ENCODE measurements at regions of chr17 and their contacts with region 1.

Region 1: DNA sequence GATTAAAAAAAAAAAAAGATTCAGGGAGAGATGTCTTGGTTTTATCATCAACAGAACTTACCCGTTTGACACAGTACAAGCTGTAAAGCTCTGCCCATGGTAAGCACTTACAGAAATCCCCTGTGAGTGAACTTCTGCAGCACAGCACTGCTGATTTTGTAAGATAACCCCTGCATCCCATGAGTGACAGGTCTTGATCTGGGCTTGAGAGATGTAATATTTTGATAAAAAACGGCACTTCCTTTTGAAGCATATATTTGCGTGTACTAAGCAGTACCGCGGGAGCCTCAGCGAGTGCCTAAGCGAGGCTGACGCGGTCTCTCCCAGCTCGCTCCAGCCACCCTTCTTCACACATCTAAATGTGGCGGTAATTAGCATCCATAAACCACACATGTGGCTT is 50.5 kb downstream of the IKZF3 start:
- DNase-seq: peak; percentile 64
- H3K4me3 Mint-ChIP-seq: no peak overlapping the region
- H3K27ac Mint-ChIP-seq: no peak overlapping the region
- H3K4me1 Mint-ChIP-seq: peaks cover 19% of the 10 kb centered on the region
- H3K27me3 Mint-ChIP-seq: no peaks in the 10 kb centered on the region
- CTCF ChIP-seq: no peak

Region 2: DNA sequence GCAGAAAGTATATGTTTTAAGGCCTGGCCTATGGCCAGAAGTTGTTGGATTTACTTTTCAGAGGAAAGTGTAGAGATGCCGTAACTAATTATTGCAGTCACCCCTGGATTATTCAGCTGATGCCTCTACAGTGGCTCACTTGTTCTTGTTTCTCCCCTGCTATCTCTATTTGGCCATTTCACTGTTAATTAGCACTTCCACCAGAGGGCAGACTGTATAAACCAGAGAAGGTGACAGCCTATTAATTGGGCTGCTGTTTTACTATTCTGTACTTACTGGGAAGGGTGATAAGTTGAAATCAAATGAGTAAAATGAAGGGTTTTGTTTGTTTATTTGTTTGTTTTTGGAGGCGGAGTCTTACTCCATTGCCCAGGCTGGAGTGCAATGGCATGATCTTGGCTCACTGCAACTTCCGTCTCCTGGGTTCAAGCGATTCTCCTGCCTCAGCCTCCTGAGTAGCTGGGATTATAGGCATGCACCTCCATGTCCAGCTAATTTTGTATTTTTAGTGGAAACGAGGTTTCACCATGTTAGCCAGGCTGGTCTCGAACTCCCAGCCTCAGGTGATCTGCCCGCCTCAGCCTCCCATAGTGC is 286.3 kb before region 1 on chr17:
- CTCF ChIA-PET with region 1: no interaction called
- intact Hi-C with region 1: no loop called
- DNase-seq: peak; percentile 72
- H3K4me3 Mint-ChIP-seq: no peak overlapping the region
- H3K27ac Mint-ChIP-seq: no peak overlapping the region
- H3K4me1 Mint-ChIP-seq: no peaks in the 10 kb centered on the region
- H3K27me3 Mint-ChIP-seq: no peaks in the 10 kb centered on the region
- CTCF ChIP-seq: peak; percentile 97

Region 3: DNA sequence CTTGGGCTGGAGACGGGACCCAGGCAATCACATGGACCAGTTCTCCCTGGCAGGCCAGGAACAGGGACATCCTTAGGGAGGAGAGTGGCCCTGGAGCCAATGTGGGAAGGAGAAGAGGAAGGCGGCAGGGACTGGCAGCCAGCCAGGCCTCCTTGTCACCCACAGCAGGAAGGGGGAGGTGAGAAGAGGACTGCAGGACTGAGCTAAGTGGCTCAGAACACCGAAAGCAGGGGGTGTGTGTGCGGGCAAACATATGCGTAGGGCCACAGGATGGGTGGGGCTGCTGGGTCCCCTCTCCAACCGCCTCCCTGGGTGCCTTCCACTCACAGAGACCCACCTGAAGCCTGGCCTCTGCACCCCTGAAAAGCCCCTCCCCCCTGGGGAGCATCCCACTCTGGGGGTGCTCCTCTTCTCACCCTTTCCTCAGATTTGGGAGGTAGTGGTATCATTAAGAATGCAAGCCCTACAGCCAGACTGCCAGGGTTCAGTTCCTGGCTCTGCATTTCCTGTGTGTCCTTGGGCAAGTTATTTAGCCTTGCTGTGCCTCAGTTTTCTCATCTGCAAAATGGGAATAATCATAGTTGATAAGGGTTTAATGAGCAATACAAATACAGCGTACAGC is 137.3 kb before region 1 on chr17:
- CTCF ChIA-PET with region 1: interaction called, 145 read pairs
- intact Hi-C with region 1: no loop called
- DNase-seq: peak; percentile 100
- H3K4me3 Mint-ChIP-seq: peak overlapping the region; percentile 3
- H3K27ac Mint-ChIP-seq: peak overlapping the region; percentile 62
- H3K4me1 Mint-ChIP-seq: peaks cover 91% of the 10 kb centered on the region
- H3K27me3 Mint-ChIP-seq: peaks cover 6% of the 10 kb centered on the region
- CTCF ChIP-seq: no peak

Region 4: GRCh38 chr17:39730095-39730921 is 83.3 kb before region 1 on chr17 and contains the start of gene MIEN1:
- CTCF ChIA-PET with region 1: interaction called, 1,211 read pairs
- intact Hi-C with region 1: no loop called
- DNase-seq: no peak
- H3K4me3 Mint-ChIP-seq: peak within 1 kb of the TSS; percentile 79
- H3K27ac Mint-ChIP-seq: peak within 1 kb of the TSS; percentile 90
- H3K4me1 Mint-ChIP-seq: peaks cover 34% of the 10 kb centered on the region
- H3K27me3 Mint-ChIP-seq: no peaks in the 10 kb centered on the region
- CTCF ChIP-seq: no peak
- total RNA-seq, gene MIEN1: 2,121 and 2,217 TPM in 2 replicates

Region 5: GRCh38 chr17:39787743-39788484 is 25.7 kb before region 1 on chr17:
- CTCF ChIA-PET with region 1: interaction called, 1,210 read pairs
- intact Hi-C with region 1: no loop called
- DNase-seq: peak; percentile 80
- H3K4me3 Mint-ChIP-seq: no peak overlapping the region
- H3K27ac Mint-ChIP-seq: no peak overlapping the region
- H3K4me1 Mint-ChIP-seq: peaks cover 29% of the 10 kb centered on the region
- H3K27me3 Mint-ChIP-seq: no peaks in the 10 kb centered on the region
- CTCF ChIP-seq: no peak

Region 6: DNA sequence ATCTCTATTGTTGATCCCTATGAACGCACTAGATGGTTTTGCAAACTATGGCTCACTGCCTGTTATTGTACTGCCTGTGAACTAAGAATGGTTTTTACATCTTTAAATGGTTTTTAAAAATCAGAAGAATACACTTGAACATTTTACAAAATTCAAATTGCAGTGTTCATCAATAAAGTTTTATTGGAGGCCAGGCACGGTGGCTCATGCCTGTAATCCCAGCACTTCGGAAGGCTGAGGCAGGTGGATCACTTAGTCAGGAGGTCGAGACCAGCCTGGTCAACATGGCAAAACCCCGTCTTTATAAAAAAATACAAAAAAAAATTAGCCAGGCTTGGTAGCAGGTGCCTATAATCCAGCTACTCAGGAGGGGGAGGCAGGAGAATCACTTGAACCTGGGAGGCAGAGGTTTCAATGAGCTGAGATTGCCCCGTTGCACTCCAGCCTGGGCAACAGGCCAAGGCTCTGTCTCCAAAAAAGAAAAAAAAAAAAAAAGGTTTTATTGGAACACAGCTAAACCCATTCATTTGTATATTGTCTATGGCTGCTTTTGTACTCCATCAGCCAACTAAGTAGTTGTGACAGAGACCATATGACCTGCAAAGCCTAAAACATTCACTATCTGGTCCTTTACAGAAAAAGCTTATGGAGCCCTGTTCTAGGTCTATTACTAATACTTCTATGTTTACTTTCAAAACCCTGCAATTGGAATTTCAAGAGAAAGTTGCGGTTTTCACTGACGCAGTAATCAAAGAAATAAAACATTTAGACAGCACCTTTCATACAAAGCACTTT is 31.6 kb after region 1 on chr17:
- CTCF ChIA-PET with region 1: interaction called, 809 read pairs
- intact Hi-C with region 1: no loop called
- DNase-seq: peak; percentile 81
- H3K4me3 Mint-ChIP-seq: no peak overlapping the region
- H3K27ac Mint-ChIP-seq: no peak overlapping the region
- H3K4me1 Mint-ChIP-seq: peaks cover 10% of the 10 kb centered on the region
- H3K27me3 Mint-ChIP-seq: no peaks in the 10 kb centered on the region
- CTCF ChIP-seq: no peak

Region 7: GRCh38 chr17:39939588-39940419 is 126.2 kb after region 1 on chr17:
- CTCF ChIA-PET with region 1: interaction called, 1,809 read pairs
- intact Hi-C with region 1: no loop called
- DNase-seq: peak; percentile 76
- H3K4me3 Mint-ChIP-seq: no peak overlapping the region
- H3K27ac Mint-ChIP-seq: no peak overlapping the region
- H3K4me1 Mint-ChIP-seq: peaks cover 12% of the 10 kb centered on the region
- H3K27me3 Mint-ChIP-seq: peaks cover 63% of the 10 kb centered on the region
- CTCF ChIP-seq: no peak

Region 8: DNA sequence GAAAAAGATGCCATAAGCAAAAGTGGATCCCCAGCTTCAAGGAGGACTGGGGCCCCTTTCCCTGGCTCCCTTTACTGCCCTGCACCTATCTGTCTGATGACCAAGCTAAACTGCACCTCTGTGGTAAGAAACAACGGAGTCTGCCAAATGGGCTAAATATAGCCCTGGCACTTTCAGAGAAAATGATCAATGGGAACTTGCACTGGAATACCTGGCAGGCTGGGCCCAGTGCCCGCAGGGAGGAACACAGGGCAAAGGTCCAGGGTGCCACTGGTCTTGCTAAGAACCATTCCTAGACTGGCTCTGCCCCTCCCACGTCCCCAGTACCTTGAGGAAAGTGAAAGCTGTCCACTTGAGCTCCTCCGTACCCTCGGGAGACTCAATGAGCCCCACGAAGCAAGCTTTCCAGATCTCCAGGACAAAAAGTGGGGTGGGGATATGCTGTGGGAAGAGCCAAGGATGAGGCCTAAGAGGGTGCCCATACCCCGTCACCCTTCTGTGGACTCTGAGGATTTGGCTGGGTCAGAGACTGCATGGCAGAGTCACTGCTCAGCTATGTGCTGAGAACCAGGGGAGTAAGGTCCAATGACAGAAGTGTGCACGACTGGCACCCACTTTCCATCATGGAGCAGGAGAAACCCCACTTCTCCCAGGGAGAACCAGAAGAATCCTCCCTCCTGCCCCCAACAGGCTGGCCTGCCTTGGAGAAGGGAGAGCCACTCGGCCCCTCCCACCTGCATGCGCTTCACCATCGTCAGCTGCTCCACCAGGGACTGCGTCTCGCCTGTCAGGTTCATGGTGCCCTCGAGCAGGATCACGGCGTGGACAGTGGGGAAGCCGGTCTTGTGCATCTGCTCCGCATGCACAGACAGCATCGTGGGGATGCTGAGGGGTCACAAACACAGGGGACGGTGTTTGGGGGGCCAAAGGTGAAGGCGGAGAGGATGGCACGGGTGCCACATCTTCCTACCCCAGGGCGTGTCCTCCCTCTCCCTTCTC is 219.0 kb after region 1 on chr17:
- CTCF ChIA-PET with region 1: no interaction called
- intact Hi-C with region 1: no loop called
- DNase-seq: peak; percentile 51
- H3K4me3 Mint-ChIP-seq: no peak overlapping the region
- H3K27ac Mint-ChIP-seq: no peak overlapping the region
- H3K4me1 Mint-ChIP-seq: peaks cover 8% of the 10 kb centered on the region
- H3K27me3 Mint-ChIP-seq: no peaks in the 10 kb centered on the region
- CTCF ChIP-seq: no peak

Region 9: GRCh38 chr17:40121181-40122135 is 307.8 kb after region 1 on chr17 and contains the start of gene MSL1:
- CTCF ChIA-PET with region 1: no interaction called
- intact Hi-C with region 1: no loop called
- DNase-seq: peak; percentile 100
- H3K4me3 Mint-ChIP-seq: peak within 1 kb of the TSS; percentile 86
- H3K27ac Mint-ChIP-seq: peak within 1 kb of the TSS; percentile 53
- H3K4me1 Mint-ChIP-seq: peaks cover 48% of the 10 kb centered on the region
- H3K27me3 Mint-ChIP-seq: no peaks in the 10 kb centered on the region
- CTCF ChIP-seq: no peak
- total RNA-seq, gene MSL1: 505 and 524 TPM in 2 replicates

Region 10: DNA sequence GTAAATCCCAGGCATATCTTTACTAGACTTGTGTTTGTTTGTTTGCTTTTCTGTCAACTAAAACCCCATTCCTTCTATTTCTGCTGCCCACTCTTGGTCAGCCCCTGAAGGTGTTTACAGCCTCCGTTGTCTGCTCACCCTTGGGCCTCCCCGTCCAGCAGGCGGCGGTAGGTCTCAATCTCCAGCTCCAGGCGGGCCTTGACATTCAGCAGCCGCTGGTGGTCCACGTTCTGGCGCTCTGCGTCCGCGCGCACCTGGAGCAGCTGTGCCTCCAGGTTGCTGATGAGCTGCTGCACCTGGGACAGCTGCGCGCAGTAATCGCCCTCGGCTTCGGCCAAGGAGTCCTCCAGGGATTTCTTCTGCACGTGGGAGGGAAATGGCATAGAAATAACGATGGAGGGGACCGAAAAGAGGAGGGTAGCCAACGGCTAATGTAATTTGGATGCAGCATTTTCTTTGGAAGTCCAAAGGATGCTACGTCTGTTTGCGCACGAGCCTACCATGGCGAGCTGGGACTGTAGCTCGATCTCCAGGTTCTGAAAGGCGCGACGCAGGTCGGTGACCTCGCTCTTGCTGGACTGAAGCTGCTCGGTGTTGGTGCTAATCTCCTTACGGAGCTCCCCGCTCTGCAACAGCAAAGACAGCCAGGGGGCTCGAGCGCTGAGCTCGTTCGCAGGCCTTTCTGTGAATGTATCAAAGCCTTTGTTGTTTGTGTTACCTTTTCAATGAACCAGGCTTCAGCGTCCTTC is 1049.5 kb after region 1 on chr17:
- CTCF ChIA-PET with region 1: no interaction called
- intact Hi-C with region 1: no loop called
- DNase-seq: no peak
- H3K4me3 Mint-ChIP-seq: no peak overlapping the region
- H3K27ac Mint-ChIP-seq: no peak overlapping the region
- H3K4me1 Mint-ChIP-seq: peaks cover 25% of the 10 kb centered on the region
- H3K27me3 Mint-ChIP-seq: no peaks in the 10 kb centered on the region
- CTCF ChIP-seq: no peak

Measured in Calu3 (cell line).